ENCODE measurements at regions of chr11 and their contacts with region 1.

Region 1: GRCh38 chr11:108593214-108593922 is at the start of gene EXPH5:
- DNase-seq: peak; percentile 65 to 91 (median 85)
- ATAC-seq: peak; percentile 94
- H3K4me3 ChIP-seq: peak within 1 kb of the TSS; percentile 63 to 66
- H3K4me3 Mint-ChIP-seq: peak within 1 kb of the TSS; percentile 95
- H3K27ac ChIP-seq: peak within 1 kb of the TSS; percentile 22 to 69
- H3K27ac Mint-ChIP-seq: peak within 1 kb of the TSS; percentile 90
- H3K4me1 ChIP-seq: peaks cover 14% of the 10 kb centered on the region
- H3K4me1 Mint-ChIP-seq: peaks cover 16% of the 10 kb centered on the region
- H3K27me3 ChIP-seq: peaks cover 0 to 4% of the 10 kb centered on the region in 2 experiments
- H3K27me3 Mint-ChIP-seq: peaks cover 13% of the 10 kb centered on the region
- CTCF ChIP-seq: no peak
- total RNA-seq, gene EXPH5: 1.5 to 1.7 TPM

Region 2: GRCh38 chr11:108497317-108498045 is 95.9 kb before region 1 on chr11:
- CTCF ChIA-PET with region 1: no interaction called
- POLR2A ChIA-PET with region 1: interaction called, 3 read pairs
- intact Hi-C with region 1: loop called (anchors 1 to 5 kb)
- DNase-seq: peak; percentile 24 to 91 (median 65)
- ATAC-seq: peak; percentile 87
- H3K4me3 ChIP-seq: peak overlapping the region; percentile 75 to 78
- H3K4me3 Mint-ChIP-seq: peak overlapping the region; percentile 98
- H3K27ac ChIP-seq: peak overlapping the region; percentile 92 to 94
- H3K27ac Mint-ChIP-seq: peak overlapping the region; percentile 99
- H3K4me1 ChIP-seq: peaks cover 9% of the 10 kb centered on the region
- H3K4me1 Mint-ChIP-seq: peaks cover 28% of the 10 kb centered on the region
- H3K27me3 ChIP-seq: no peaks in the 10 kb centered on the region
- H3K27me3 Mint-ChIP-seq: no peaks in the 10 kb centered on the region
- CTCF ChIP-seq: no peak

Measured in CD8-positive, alpha-beta T cell (primary cell).